ENCODE measurements at regions of chr7 and their contacts with region 1.

Region 1: DNA sequence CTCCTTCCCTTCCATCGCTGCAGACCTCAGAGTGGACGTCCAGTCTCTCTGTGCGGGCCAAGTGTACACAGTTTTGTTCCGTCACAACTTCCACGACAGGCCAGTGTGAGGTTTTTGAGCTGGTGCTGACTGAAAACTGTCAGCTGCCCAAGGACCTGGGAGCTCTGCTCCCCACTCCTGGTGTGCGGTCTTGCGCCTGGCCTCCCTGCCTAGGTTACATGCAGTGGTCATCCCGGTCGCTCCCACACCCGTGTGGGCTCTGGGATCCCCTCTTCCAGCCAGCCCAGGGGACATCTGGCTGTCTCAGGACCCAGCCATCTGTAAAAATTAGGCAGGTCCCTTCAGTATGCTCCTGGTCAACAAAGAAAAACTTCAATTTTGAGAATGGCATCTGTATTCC is 127.5 kb downstream of the VIPR2 start:
- DNase-seq: no peak
- H3K4me3 Mint-ChIP-seq: no peak overlapping the region
- H3K27ac Mint-ChIP-seq: no peak overlapping the region
- H3K4me1 Mint-ChIP-seq: peaks cover 14% of the 10 kb centered on the region
- H3K27me3 Mint-ChIP-seq: peaks cover 15% of the 10 kb centered on the region

Region 2: GRCh38 chr7:158572003-158572828 is 445.0 kb before region 1 on chr7:
- CTCF ChIA-PET with region 1: no interaction called
- POLR2A ChIA-PET with region 1: no interaction called
- intact Hi-C with region 1: no loop called
- DNase-seq: no peak
- H3K4me3 Mint-ChIP-seq: no peak overlapping the region
- H3K27ac Mint-ChIP-seq: no peak overlapping the region
- H3K4me1 Mint-ChIP-seq: no peaks in the 10 kb centered on the region
- H3K27me3 Mint-ChIP-seq: peaks cover 24% of the 10 kb centered on the region

Region 3: GRCh38 chr7:159004411-159004810 is 12.8 kb before region 1 on chr7:
- CTCF ChIA-PET with region 1: no interaction called
- POLR2A ChIA-PET with region 1: no interaction called
- intact Hi-C with region 1: loop called (anchors 1 kb)
- DNase-seq: peak; percentile 75
- H3K4me3 Mint-ChIP-seq: no peak overlapping the region
- H3K27ac Mint-ChIP-seq: peak overlapping the region; percentile 68
- H3K4me1 Mint-ChIP-seq: peaks cover 29% of the 10 kb centered on the region
- H3K27me3 Mint-ChIP-seq: peaks cover 12% of the 10 kb centered on the region

Region 4: GRCh38 chr7:159098811-159099655 is 81.8 kb after region 1 on chr7:
- CTCF ChIA-PET with region 1: no interaction called
- POLR2A ChIA-PET with region 1: no interaction called
- intact Hi-C with region 1: no loop called
- DNase-seq: no peak
- H3K4me3 Mint-ChIP-seq: no peak overlapping the region
- H3K27ac Mint-ChIP-seq: no peak overlapping the region
- H3K4me1 Mint-ChIP-seq: no peaks in the 10 kb centered on the region
- H3K27me3 Mint-ChIP-seq: no peaks in the 10 kb centered on the region

Measured in activated CD4-positive, alpha-beta memory T cell treated with anti-CD3 and anti-CD28 coated beads for 36 hours (primary cell).